ENCODE measurements at regions of chr2 and their contacts with region 1.

Region 1: GRCh38 chr2:190880378-190881073 is at the start of gene GLS:
- DNase-seq: peak; percentile 98
- ATAC-seq: peak; percentile 84
- H3K4me3 ChIP-seq: peak within 1 kb of the TSS; percentile 80
- H3K27ac ChIP-seq: peak within 1 kb of the TSS; percentile 63
- H3K4me1 ChIP-seq: peaks cover 20% of the 10 kb centered on the region
- H3K27me3 ChIP-seq: no peaks in the 10 kb centered on the region
- CTCF ChIP-seq: no peak
- total RNA-seq, gene GLS: 67.4 and 71.9 TPM in 2 replicates

Region 2: DNA sequence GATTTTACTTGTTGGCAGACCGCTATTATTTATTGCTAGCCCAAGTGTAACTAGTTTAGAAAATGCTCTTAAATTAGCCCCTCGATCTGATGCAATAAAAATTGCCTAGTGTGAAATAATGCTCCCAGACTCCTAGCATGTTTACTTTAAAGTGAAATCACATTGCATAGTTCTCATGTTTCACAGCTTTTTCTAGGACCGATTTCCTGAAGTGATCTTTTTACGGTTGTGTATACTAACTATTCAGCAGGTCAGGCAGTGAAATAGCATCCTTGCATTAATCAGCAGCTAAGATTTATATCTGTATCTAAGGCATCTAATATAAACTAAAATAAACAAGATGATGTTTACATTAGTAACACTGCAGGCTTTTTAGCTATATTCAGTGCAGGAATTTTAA is 1043.9 kb before region 1 on chr2:
- CTCF ChIA-PET with region 1: no interaction called
- POLR2A ChIA-PET with region 1: interaction called, 12 read pairs
- intact Hi-C with region 1: no loop called
- DNase-seq: peak; percentile 80
- ATAC-seq: peak; percentile 96
- H3K4me3 ChIP-seq: peak overlapping the region; percentile 3; the same call in 1 of the 2 replicates
- H3K27ac ChIP-seq: peak overlapping the region; percentile 65
- H3K4me1 ChIP-seq: peaks cover 17% of the 10 kb centered on the region
- H3K27me3 ChIP-seq: no peaks in the 10 kb centered on the region
- CTCF ChIP-seq: no peak

Region 3: DNA sequence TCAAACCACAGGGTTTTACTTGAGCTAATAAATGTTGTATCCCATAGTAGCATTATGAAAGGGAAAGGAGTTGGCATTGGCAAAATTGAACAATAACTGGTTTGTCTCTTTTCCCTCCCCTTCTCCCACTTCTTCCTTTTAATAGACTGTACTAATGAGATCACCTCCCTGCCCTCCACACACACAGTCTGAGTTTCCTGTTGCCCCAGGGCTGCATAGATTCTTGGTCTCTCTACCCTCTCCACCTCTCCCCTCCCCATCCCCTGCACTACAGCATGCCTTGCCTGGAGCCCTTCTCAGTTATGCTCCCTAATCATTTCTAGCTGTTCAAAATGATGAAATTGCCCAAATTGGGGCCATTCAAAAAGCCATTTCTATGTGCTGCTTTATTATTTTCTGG is 308.8 kb before region 1 on chr2:
- CTCF ChIA-PET with region 1: no interaction called
- POLR2A ChIA-PET with region 1: no interaction called
- intact Hi-C with region 1: no loop called
- DNase-seq: peak; percentile 63
- ATAC-seq: peak; percentile 92
- H3K4me3 ChIP-seq: no peak overlapping the region
- H3K27ac ChIP-seq: peak overlapping the region; percentile 66
- H3K4me1 ChIP-seq: peaks cover 18% of the 10 kb centered on the region
- H3K27me3 ChIP-seq: no peaks in the 10 kb centered on the region
- CTCF ChIP-seq: no peak

Region 4: DNA sequence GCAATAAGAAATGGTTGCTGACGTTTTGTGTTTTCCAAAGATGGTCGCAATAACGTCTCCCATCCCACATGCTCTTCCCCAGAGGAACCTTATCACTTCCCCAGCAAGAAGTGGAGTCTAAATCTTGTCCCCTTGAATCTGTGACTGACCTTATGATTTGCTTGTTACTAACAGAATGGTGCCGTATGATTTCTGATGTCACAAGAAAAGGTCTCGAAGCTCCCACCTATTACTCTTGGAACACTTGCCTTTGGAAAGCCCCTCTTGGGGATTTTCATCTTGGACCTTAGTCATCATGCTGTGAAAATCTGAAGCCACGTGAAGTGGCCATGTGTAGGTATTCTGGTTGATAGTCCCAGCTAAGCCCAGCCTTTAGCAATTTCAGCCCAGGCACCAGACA is 86.1 kb before region 1 on chr2:
- CTCF ChIA-PET with region 1: no interaction called
- POLR2A ChIA-PET with region 1: interaction called, 11 read pairs
- intact Hi-C with region 1: no loop called
- DNase-seq: no peak
- ATAC-seq: no peak
- H3K4me3 ChIP-seq: no peak overlapping the region
- H3K27ac ChIP-seq: no peak overlapping the region
- H3K4me1 ChIP-seq: peaks cover 20% of the 10 kb centered on the region
- H3K27me3 ChIP-seq: no peaks in the 10 kb centered on the region
- CTCF ChIP-seq: no peak

Region 5: GRCh38 chr2:190835303-190835930 is 45.1 kb before region 1 on chr2:
- CTCF ChIA-PET with region 1: interaction called, 4 read pairs
- POLR2A ChIA-PET with region 1: no interaction called
- intact Hi-C with region 1: loop called (anchors 1 kb)
- DNase-seq: peak; percentile 91
- ATAC-seq: peak; percentile 75
- H3K4me3 ChIP-seq: no peak overlapping the region
- H3K27ac ChIP-seq: peak overlapping the region; percentile 2; the same call in 1 of the 2 replicates
- H3K4me1 ChIP-seq: peaks cover 59% of the 10 kb centered on the region
- H3K27me3 ChIP-seq: no peaks in the 10 kb centered on the region
- CTCF ChIP-seq: no peak

Region 6: GRCh38 chr2:190843874-190844699 is 36.4 kb before region 1 on chr2:
- CTCF ChIA-PET with region 1: no interaction called
- POLR2A ChIA-PET with region 1: no interaction called
- intact Hi-C with region 1: loop called (anchors 2 kb)
- DNase-seq: peak; percentile 95
- ATAC-seq: peak; percentile 76
- H3K4me3 ChIP-seq: peak overlapping the region; percentile 61
- H3K27ac ChIP-seq: peak overlapping the region; percentile 99
- H3K4me1 ChIP-seq: peaks cover 89% of the 10 kb centered on the region
- H3K27me3 ChIP-seq: no peaks in the 10 kb centered on the region
- CTCF ChIP-seq: no peak

Region 7: DNA sequence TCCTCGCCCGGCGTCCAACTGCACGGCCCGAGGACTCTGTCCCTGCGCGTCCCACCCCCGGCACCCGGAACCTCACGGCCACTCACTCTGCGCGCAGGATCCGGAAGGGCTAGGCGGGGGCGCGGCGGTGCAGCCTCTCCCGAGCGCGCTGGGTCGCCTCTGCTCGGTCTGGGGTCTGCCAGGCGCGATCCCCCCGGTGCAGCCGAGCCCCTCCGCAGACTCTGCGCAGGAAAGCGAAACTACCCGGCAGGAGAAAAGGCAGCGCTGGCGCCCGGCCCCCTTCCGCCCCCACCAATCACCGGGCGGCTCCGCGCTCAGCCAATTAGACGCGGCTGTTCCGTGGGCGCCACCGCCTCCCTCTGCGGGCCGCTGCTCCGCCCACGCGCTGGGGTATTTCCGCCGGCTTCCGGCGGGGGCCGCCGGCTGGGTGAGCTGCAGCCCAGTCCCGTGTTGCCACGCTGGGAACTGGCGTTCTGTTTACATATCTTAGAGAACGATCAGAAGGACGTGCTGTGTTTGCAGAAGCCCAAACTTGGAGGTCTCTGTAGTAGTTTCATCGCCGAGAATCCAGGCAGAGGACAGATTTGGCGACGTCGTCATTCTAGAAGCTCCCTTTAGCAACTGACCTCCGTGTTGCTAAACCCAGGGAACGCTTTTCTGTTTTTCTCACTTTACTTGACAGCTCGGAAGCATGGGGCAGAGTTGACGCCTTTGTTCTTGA is 133.6 kb after region 1 on chr2 and contains the start of gene STAT1:
- CTCF ChIA-PET with region 1: no interaction called
- POLR2A ChIA-PET with region 1: no interaction called
- intact Hi-C with region 1: loop called (anchors 5 kb)
- DNase-seq: peak; percentile 94
- ATAC-seq: peak; percentile 86
- H3K4me3 ChIP-seq: peak within 1 kb of the TSS; percentile 89
- H3K27ac ChIP-seq: peak within 1 kb of the TSS; percentile 43
- H3K4me1 ChIP-seq: peaks cover 24% of the 10 kb centered on the region
- H3K27me3 ChIP-seq: no peaks in the 10 kb centered on the region
- CTCF ChIP-seq: no peak
- total RNA-seq, gene STAT1: 45.6 and 47.9 TPM in 2 replicates